Common myeloid progenitor, CD34-positive (primary cell): ENCODE measurements at regions of chr11 and their contacts with region 1.

Region 1: DNA sequence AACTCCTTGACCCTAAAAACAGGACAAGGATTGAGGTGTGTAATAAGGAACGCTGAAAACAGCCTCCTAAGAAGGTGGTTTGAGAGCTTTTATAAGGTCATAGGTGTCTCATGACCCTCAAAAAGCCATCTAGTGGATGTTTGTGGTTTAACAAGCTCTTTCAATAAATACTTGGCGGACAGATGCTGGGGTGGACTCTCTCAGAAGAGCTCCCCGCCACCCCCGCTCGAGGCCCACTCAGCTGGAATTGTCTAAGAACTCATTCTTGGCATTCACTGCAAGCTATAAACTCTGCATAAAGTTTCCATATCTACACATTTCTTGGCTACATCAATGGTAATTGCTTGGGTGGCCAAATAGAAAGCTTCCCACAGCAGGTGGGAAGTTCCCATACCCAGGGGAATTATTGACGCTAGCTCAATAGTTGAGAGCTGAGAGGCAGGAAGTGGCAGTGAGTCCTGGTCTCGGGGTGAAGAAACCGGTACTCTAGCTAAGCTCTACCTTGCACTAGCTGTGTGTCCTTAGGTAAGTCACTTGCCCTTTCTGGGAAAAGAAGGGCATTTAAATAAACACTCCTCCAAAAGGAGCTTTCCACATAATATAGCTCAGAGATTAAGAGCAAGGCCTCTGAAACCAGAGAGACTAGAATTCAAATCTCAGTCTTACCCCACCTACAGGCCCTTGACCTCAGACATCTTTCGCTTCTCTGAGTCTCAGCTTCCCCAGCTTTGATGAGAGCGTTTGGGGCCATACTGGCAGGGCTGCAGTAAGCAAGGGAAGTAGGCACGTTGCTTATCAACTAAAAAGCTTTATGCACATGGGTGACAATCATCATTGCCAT is 6.4 kb downstream of the MS4A15 start:
- DNase-seq: peak; percentile 22 to 42 (median 38)
- H3K4me3 ChIP-seq: no peak overlapping the region
- H3K27ac ChIP-seq: no peak overlapping the region
- H3K4me1 ChIP-seq: peaks cover 4 to 22% (median 16%) of the 10 kb centered on the region in 4 experiments
- H3K27me3 ChIP-seq: peaks cover 0 to 4% (median 0%) of the 10 kb centered on the region in 5 experiments

Region 2: DNA sequence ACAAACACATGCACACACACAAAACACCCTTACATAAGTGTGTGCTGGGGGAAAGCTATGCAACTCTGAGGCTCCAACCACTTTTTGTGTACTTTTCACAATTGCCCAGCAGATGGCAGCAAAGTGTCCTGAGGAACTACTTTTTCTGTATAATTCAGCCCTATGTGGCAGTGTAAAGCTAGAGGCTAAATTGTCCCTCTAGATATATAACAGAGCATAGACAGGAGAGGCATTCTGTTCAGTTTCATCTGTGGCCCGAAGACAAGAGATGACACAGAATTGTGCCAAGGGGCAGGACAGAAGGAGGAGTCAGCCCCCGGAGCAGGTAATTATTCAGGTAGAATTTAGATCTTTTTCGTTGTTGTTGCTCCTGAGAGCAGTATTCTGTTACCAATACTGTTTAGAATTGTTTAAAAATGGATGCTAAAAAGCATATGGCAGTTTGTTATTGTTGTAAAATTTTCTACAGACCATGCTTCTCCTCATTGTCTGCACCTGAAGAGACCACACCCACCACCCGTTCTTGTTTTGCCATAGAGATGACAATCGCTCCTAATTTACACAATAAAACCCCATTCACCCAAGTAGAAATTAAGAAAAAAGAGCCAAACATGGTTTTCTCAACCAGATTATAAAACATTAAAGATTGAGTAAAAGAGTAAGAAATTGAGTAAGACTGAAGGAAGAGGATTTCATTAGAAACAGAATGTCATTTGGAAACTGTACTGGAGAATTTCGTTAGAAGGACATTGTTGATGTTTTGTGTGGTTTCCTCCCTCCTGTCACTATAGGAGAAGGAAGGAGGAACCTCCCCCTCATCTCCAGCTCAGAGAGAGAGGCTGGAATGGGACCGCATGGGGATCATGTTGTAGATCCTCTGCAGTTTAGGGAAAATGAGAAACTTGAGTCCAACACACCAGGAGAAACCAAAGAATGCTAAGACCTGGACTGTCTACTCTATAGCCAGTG is 399.2 kb before region 1 on chr11:
- CTCF ChIA-PET with region 1: no interaction called
- POLR2A ChIA-PET with region 1: no interaction called
- DNase-seq: peak; percentile 72 to 89 (median 83)
- H3K4me3 ChIP-seq: peak overlapping the region in 4 of 7 experiments; percentile 9 to 40 (median 32)
- H3K27ac ChIP-seq: no peak overlapping the region
- H3K4me1 ChIP-seq: peaks cover 7 to 20% (median 17%) of the 10 kb centered on the region in 4 experiments
- H3K27me3 ChIP-seq: no peaks in the 10 kb centered on the region

Region 3: GRCh38 chr11:60748821-60749220 is 14.2 kb before region 1 on chr11:
- CTCF ChIA-PET with region 1: interaction called, 11 read pairs
- POLR2A ChIA-PET with region 1: no interaction called
- DNase-seq: no peak
- H3K4me3 ChIP-seq: no peak overlapping the region
- H3K27ac ChIP-seq: no peak overlapping the region
- H3K4me1 ChIP-seq: no peaks in the 10 kb centered on the region
- H3K27me3 ChIP-seq: peaks cover 0 to 8% (median 2%) of the 10 kb centered on the region in 5 experiments